Activated CD4-positive, alpha-beta memory T cell treated with anti-CD3 and anti-CD28 coated beads, Interleukin-2, amount 10 ng/mL, durations not matched to agents 7 days and 5 days (primary cell): ENCODE measurements at regions of chr3 and their contacts with region 1.

Region 1: GRCh38 chr3:42831321-42831713 is 22.1 kb downstream of the ACKR2 start:
- DNase-seq: peak; percentile 85
- H3K4me3 Mint-ChIP-seq: no peak overlapping the region
- H3K27ac Mint-ChIP-seq: no peak overlapping the region
- H3K4me1 Mint-ChIP-seq: peaks cover 12% of the 10 kb centered on the region
- H3K27me3 Mint-ChIP-seq: peaks cover 14% of the 10 kb centered on the region

Region 2: GRCh38 chr3:42518800-42519567 is 312.3 kb before region 1 on chr3:
- CTCF ChIA-PET with region 1: no interaction called
- POLR2A ChIA-PET with region 1: no interaction called
- DNase-seq: peak; percentile 58
- H3K4me3 Mint-ChIP-seq: no peak overlapping the region
- H3K27ac Mint-ChIP-seq: no peak overlapping the region
- H3K4me1 Mint-ChIP-seq: peaks cover 30% of the 10 kb centered on the region
- H3K27me3 Mint-ChIP-seq: no peaks in the 10 kb centered on the region

Region 3: GRCh38 chr3:42880601-42881451 is 49.5 kb after region 1 on chr3:
- CTCF ChIA-PET with region 1: interaction called, 19 read pairs
- POLR2A ChIA-PET with region 1: interaction called, 4 read pairs
- DNase-seq: peak; percentile 92
- H3K4me3 Mint-ChIP-seq: peak overlapping the region; percentile 74
- H3K27ac Mint-ChIP-seq: peak overlapping the region; percentile 81
- H3K4me1 Mint-ChIP-seq: peaks cover 15% of the 10 kb centered on the region
- H3K27me3 Mint-ChIP-seq: peaks cover 10% of the 10 kb centered on the region